ENCODE measurements at regions of chr1 and their contacts with region 1.

Region 1: GRCh38 chr1:21319447-21320407 is 29.5 kb upstream of the ECE1 start:
- DNase-seq: no peak

Region 2: GRCh38 chr1:21334214-21335087 is 14.7 kb after region 1 on chr1:
- CTCF ChIA-PET with region 1: interaction called, 12 read pairs
- POLR2A ChIA-PET with region 1: interaction called, 5 read pairs
- DNase-seq: peak; percentile 71

Region 3: DNA sequence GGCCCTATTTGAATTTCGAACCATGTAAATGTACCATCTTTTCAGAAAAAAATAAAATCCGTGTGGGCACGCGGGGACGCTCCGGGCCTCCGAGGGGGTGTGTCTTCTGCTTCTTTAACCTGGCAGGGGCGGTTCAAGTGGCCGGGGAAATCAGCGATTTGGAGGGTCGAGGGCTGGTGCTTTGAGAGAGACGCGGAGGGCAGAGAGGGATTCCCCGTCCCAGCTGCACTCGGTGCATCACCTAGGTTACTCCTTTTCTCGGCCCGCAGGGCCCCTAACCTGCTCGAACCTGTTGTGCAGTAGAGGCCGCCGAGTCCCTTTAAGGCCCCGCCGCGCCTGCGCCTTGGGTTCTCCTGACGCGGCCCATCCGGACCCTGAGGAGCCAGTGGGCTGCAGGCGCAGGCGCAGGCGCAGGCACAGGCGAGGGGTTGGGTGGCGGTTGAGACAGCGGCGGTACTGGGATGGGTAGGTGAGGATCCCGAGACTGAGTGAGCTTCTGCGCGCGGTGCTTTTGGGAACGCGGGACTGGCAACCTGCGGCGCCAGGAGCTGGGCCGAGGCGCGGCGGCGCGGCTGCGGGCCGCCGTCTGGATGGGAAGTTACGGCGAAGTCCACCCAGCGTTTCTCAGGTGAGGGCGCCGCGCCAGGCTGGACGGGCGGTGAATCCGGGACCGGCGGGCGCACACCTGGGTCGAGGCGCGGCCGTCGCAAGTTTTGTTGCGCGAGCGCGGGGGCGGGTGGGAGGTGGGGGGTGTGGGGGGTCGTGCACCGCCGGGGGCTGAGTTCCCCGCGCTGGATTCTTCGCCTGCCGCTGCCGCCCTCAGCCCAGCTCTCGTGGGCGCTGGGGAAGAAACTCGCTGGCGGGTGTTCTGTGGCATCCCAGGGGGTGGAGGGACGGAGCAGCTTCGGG is 120.2 kb after region 1 on chr1 and contains the start of gene NBPF3:
- CTCF ChIA-PET with region 1: no interaction called
- POLR2A ChIA-PET with region 1: no interaction called
- DNase-seq: peak; percentile 84

Measured in HEK293T (cell line).